SK-N-SH (cell line): ENCODE measurements at regions of chr1 and their contacts with region 1.

Region 1: DNA sequence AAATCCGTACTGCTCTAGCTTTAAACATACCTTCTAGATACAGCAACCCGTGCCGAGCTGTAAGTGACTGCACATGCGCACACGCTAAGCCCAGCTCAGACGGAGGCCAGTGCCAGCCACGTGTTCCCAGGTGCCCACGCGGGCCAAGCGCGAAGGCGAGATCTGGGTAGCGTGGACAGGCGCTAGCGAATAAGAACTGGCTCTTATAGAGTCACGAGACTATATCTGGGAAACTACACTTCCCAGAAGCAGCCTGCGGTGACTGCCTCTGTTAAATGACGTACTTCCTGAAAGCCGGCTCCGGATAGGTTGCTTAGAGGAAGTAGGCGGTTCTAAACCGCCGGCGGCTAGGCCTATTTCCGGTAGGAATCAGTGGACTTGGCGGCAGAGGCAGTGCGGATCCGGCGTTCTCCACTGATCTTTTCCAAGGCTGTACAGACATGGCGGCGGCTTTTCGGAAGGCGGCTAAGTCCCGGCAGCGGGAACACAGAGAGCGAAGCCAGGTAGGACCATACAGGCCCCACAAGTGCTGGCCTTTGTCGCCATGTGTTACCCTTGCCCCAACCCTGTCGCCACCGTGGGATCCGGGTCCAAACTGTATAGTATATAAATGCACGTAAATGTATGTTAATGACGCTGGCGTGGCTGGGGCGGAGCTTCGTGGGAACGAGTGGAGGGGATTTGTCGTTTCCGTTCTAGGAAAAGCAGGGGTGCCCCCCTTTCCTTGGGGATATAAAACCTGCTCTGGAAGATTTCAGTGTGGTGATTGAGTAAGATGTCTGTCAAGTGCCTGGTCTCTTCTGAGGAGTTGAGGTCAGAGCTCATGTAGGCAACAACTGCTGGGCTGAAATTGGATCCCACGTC is at the start of gene UTP11:
- DNase-seq: peak; percentile 87
- H3K4me3 ChIP-seq: peak within 1 kb of the TSS; percentile 80 to 81
- H3K27ac ChIP-seq: peak within 1 kb of the TSS; percentile 95 to 96
- H3K4me1 ChIP-seq: peaks cover 3 to 20% of the 10 kb centered on the region in 2 experiments; a peak in 2 of 4 replicates
- H3K27me3 ChIP-seq: no peaks in the 10 kb centered on the region
- CTCF ChIP-seq: no peak
- EP300 ChIP-seq: peak in 1 of 2 experiments; percentile 19; a peak in 1 of 4 replicates
- RAD21 ChIP-seq: no peak
- polyA plus RNA-seq, gene UTP11: 26.8 and 27.3 TPM in 2 replicates

Region 2: GRCh38 chr1:38026592-38027200 is 14.1 kb after region 1 on chr1:
- CTCF ChIA-PET with region 1: interaction called, 52 read pairs
- POLR2A ChIA-PET with region 1: interaction called, 3 read pairs
- DNase-seq: no peak
- H3K4me3 ChIP-seq: peak overlapping the region in 1 of 2 experiments; percentile 21; a peak in 1 of 4 replicates
- H3K27ac ChIP-seq: no peak overlapping the region
- H3K4me1 ChIP-seq: peaks cover 31 to 34% of the 10 kb centered on the region in 2 experiments; a peak in 3 of 4 replicates
- H3K27me3 ChIP-seq: no peaks in the 10 kb centered on the region
- CTCF ChIP-seq: peak; percentile 81
- EP300 ChIP-seq: no peak
- RAD21 ChIP-seq: peak; percentile 75

Region 3: DNA sequence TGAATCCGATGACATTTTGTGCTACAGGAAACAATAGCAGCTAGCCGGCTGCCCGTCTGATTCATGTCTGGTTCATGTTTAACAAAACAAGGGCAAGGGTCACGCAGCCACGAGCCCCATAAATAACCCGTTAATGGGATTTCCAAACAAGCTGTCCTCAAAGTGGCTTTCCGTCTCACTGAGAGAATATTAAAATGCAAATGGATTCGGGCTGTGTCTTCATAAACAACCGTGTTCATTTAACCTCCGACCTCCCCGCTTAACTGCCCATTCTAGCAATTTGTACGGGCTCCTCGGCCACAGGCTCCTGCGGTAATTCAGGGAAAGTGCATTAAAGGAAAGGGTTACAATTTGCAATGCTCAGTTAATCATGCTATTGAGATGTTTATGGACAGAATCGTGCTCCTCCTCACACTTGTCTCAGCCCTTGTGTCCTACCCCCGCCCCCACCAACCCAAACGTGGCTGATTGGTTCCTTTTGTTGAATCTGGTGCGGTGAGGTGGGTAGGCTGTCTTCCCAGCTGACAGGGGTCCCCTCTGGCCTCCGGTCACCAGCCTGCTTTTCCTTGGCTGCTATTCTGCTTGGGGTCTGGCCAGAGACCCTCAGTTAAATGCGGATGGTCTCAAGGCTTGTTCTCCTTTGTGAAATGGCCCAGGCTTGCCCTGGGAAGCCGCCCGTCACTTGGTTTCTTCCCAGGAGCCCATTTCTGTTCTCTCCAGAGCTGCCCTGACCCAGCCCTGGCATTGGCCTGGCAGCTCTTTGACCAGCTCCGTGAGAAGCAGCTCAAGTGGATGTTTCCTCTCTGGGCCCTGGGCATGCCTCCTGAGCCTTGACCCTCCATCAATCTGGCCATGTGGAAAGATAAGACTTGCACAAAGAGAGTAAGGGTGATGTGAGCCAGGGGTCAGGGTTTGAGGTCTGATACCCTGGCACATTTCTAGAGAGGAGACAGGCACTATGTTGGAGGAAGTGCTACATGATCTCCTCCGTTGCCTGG is 234.7 kb after region 1 on chr1:
- CTCF ChIA-PET with region 1: no interaction called
- POLR2A ChIA-PET with region 1: no interaction called
- DNase-seq: no peak
- H3K4me3 ChIP-seq: no peak overlapping the region
- H3K27ac ChIP-seq: no peak overlapping the region
- H3K4me1 ChIP-seq: no peaks in the 10 kb centered on the region
- H3K27me3 ChIP-seq: peaks cover 12% of the 10 kb centered on the region; the same call in 1 of the 2 replicates
- CTCF ChIP-seq: no peak
- EP300 ChIP-seq: no peak
- RAD21 ChIP-seq: no peak